ENCODE measurements at regions of chr6 and their contacts with region 1.

Region 1: DNA sequence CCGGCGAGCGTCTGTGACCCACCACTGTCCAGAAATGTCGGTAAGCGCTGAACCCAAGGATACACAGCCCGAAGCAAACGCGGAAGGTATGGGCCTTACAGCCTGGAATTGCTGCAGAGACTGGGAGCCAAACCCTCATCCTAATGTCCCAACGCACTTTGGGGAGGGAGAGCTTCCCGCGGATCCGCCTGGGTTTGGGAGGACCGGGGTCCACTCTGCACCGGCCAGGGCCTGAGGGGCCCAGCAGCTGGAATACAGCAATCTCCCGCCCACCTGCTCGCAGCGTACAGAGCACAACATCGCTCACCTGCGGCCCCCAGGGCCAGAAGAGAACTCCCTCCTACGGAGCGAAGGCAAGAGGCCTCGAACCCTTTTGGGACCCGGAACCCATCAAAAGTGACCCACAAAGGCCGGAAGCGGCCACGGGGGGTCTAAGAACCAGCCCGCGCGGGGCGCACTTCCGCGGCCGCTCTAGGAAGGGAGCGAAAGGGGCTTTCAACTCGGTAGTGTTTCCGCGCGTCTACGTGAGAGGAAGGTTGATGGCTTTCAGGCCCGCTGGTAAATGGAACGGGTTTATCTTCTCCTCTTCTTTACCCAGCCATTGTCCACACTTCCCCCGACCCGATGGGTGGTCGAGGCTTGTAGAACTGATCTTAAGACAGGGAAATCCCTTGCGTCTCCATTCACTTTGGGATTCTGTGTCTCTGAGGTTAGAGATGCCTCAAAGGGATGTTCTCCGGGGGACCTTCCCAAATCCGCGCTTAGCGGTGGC is at the start of gene ZSCAN12:
- DNase-seq: peak; percentile 81 to 90
- ATAC-seq: peak; percentile 95 to 96 (median 96)
- H3K4me3 ChIP-seq: peak within 1 kb of the TSS; percentile 92
- H3K4me3 Mint-ChIP-seq: peak within 1 kb of the TSS; percentile 93
- H3K27ac ChIP-seq: peak within 1 kb of the TSS; percentile 73
- H3K27ac Mint-ChIP-seq: peak within 1 kb of the TSS; percentile 80 to 89
- H3K4me1 ChIP-seq: peaks cover 16% of the 10 kb centered on the region
- H3K4me1 Mint-ChIP-seq: peaks cover 46 to 49% of the 10 kb centered on the region in 2 donors
- H3K27me3 ChIP-seq: peaks cover 3% of the 10 kb centered on the region
- H3K27me3 Mint-ChIP-seq: peaks cover 18 to 40% of the 10 kb centered on the region in 2 donors
- CTCF ChIP-seq: peak; percentile 54
- total RNA-seq, gene ZSCAN12: 3.5 to 4.9 (median 3.9) TPM

Region 2: DNA sequence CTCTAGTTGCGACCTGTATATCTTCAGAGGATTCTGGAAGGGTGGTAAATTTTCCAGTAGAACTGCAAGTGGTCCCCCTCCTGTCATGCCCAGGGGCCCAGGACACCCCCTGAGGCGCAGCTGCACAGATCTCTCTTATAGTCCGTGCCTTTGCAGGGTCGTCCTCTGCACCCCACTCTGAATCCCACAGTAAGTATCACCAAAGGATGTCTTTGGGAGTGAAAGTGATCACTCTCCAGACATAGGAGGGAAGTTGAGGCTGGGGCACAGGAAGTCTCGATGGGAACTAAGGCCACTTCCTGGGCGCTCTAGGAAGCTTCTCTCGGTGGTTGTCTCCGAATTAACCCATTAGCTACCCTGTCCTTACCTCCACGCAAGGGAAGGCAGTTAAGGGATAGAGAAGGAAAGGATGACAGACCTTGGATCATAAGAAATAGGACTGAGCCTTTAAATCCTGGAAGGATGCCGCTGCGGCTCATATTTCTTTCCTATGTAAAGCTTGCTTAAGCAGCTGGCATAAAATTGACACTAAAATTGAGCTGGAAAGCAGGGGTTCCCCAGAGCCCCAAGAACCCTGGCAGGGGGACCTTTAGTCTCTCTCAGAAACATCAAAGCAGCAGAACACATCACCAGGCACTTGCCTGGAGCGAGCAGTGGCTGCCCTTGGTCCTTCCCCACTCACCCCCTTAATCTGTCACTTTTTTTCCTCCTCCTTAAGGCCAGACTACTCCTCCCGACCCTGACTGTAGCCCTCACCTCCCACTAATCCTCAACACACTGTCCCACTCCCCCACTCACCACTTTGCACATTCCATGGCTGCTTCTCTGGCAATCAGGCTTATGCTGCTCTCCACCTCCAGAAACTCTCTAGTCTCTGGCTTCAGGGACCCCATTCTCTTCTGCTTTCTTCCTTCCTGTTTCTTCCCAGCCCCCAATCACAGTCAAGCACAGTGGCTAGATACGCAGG is 147.2 kb before region 1 on chr6 and contains the start of gene ZKSCAN4:
- intact Hi-C with region 1: loop called (anchors 1 kb)
- DNase-seq: peak; percentile 64 to 92
- ATAC-seq: peak; percentile 90 to 93 (median 91)
- H3K4me3 ChIP-seq: peak within 1 kb of the TSS; percentile 81
- H3K4me3 Mint-ChIP-seq: peak within 1 kb of the TSS; percentile 98
- H3K27ac ChIP-seq: peak within 1 kb of the TSS; percentile 59
- H3K27ac Mint-ChIP-seq: peak within 1 kb of the TSS; percentile 68 to 88
- H3K4me1 ChIP-seq: peaks cover 12% of the 10 kb centered on the region
- H3K4me1 Mint-ChIP-seq: peaks cover 31 to 38% of the 10 kb centered on the region in 2 donors
- H3K27me3 ChIP-seq: peaks cover 3% of the 10 kb centered on the region
- H3K27me3 Mint-ChIP-seq: peaks cover 3 to 8% of the 10 kb centered on the region in 2 donors
- CTCF ChIP-seq: no peak
- total RNA-seq, gene ZKSCAN4: 1.6 to 4.2 (median 2.9) TPM

Region 3: DNA sequence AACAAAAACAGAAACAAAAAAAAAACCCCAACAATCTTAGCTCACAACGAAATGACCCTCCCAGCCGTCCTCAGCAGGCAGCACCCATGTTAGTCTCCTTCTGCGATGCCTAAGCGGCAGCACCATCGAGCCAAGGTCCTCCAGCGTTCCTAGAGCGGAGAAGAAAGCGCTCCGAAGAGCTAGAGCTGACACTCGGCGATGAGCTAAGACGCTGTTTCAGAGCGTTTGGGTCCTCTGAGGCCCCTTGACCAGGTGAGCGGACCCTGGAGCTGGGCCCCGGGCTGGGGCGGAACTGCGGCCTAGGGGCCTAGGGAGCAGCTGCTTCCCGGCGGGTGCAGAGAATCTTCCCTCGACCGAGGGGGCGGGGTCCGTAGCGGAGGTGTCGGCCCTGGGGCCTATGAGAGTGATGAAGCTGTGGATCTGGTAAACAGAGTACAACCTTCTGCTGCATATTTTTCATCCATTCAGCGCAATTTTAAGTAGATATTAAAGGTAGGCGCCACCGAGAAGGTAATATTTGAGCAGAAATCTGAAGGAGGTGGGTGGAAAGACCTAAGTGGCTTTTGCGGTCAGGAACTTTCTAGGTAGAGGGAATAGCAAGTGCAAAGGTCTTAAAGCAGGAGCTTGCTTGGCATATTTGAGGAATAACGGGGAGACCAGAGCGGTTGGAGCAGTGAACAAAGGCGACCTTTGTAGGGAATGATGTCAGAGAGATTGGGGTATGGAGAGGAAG is 132.4 kb before region 1 on chr6 and contains the start of gene ZSCAN26:
- intact Hi-C with region 1: no loop called
- DNase-seq: peak; percentile 83 to 93
- ATAC-seq: peak; percentile 96 to 97 (median 96)
- H3K4me3 ChIP-seq: peak within 1 kb of the TSS; percentile 100
- H3K4me3 Mint-ChIP-seq: no peak within 1 kb of the TSS
- H3K27ac ChIP-seq: peak within 1 kb of the TSS; percentile 90
- H3K27ac Mint-ChIP-seq: no peak within 1 kb of the TSS
- H3K4me1 ChIP-seq: peaks cover 6% of the 10 kb centered on the region
- H3K4me1 Mint-ChIP-seq: no peaks in the 10 kb centered on the region
- H3K27me3 ChIP-seq: no peaks in the 10 kb centered on the region
- H3K27me3 Mint-ChIP-seq: peaks cover 5 to 28% of the 10 kb centered on the region in 2 donors
- CTCF ChIP-seq: no peak
- total RNA-seq, gene ZSCAN26: 13.7 to 24.4 (median 15.4) TPM

Region 4: DNA sequence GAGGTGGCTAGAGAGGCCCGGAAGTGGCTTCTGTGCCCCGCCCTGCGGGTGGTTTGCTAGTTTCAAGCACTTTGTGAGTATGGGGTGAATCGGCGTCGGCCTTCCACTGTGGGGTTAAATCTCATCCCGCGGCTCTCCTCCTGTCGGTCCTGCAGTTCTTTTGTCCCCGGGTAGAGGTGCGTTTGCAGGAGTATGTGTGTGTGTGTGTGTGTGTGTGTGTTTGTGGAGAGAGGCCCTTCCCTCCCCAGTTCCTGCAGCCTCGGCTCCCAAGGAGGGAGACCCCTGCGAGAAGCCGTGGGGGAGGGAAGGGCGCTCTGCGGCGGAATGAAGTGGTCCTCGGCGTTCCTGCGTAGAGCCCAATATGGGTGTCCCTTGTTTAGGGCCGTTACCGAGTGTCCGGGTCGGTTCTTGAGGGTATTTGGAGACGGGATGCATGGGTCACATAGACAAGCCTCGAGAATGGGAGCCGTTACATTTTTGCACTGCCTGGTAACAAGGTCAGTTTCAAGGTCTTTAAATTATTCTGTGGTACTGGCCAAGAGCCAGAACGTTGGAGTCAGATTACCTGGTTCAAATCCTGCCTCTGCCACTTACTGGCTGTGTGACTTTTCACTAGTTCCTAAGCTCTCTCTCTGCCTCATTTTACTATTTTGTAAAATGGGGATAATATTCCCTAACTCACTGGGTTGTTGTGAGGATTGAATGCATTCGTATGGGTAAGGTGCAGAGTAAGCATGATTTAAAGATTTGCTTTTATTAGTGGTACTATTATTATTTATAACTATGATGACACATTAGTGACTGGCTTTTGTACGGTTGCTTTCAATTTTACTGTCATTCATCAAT is 49.4 kb before region 1 on chr6 and contains the start of gene ZKSCAN3:
- intact Hi-C with region 1: loop called (anchors 5 kb)
- DNase-seq: peak; percentile 76 to 86
- ATAC-seq: peak; percentile 94 to 100 (median 99)
- H3K4me3 ChIP-seq: peak within 1 kb of the TSS; percentile 75
- H3K4me3 Mint-ChIP-seq: peak within 1 kb of the TSS; percentile 100
- H3K27ac ChIP-seq: peak within 1 kb of the TSS; percentile 44
- H3K27ac Mint-ChIP-seq: peak within 1 kb of the TSS; percentile 95 to 97
- H3K4me1 ChIP-seq: peaks cover 13% of the 10 kb centered on the region
- H3K4me1 Mint-ChIP-seq: peaks cover 24 to 27% of the 10 kb centered on the region in 2 donors
- H3K27me3 ChIP-seq: no peaks in the 10 kb centered on the region
- H3K27me3 Mint-ChIP-seq: peaks cover 9 to 18% of the 10 kb centered on the region in 2 donors
- CTCF ChIP-seq: no peak
- total RNA-seq, gene ZKSCAN3: 3.1 to 6.0 (median 4.7) TPM

Region 5: GRCh38 chr6:28360961-28361360 is 38.6 kb before region 1 on chr6:
- intact Hi-C with region 1: no loop called
- DNase-seq: no peak
- ATAC-seq: no peak
- H3K4me3 ChIP-seq: no peak overlapping the region
- H3K4me3 Mint-ChIP-seq: no peak overlapping the region
- H3K27ac ChIP-seq: no peak overlapping the region
- H3K27ac Mint-ChIP-seq: no peak overlapping the region
- H3K4me1 ChIP-seq: peaks cover 6% of the 10 kb centered on the region
- H3K4me1 Mint-ChIP-seq: peaks cover 13 to 19% of the 10 kb centered on the region in 2 donors
- H3K27me3 ChIP-seq: no peaks in the 10 kb centered on the region
- H3K27me3 Mint-ChIP-seq: no peaks in the 10 kb centered on the region
- CTCF ChIP-seq: no peak

Region 6: DNA sequence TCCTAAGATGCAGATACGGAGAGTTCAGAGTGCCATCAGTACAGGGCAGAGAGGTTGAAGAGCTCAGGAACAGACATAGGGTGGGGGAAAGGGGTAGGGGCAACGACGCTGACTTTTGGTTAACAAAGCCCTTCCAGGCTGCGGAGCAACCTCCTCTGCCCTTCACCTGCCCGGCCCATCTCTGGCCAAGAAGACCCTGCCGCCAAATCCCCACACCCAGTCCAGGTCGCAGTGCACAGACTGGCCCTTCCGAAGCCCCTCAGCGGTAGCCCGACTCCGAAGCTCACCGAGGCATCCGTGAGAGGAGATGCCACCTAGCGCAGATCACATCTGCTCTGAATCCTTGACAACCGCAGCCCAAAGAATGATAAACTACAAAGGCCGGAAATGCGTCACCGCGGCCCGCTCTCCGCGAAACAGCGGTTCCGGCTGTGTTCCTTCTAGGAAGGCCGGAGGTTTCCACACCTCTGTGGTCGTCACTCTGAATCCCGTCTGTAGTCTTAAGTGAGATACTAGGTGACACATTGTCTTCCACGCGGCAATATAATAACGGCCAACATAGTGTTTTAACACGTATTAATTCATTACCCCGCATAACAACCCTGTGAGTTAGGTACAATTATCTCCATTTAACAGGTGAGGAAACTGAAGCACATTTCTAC is 43.7 kb after region 1 on chr6 and contains the start of gene ZSCAN23:
- intact Hi-C with region 1: loop called (anchors 1 kb)
- DNase-seq: peak; percentile 70 to 94
- ATAC-seq: peak; percentile 86 to 92 (median 88)
- H3K4me3 ChIP-seq: peak within 1 kb of the TSS; percentile 38
- H3K4me3 Mint-ChIP-seq: peak within 1 kb of the TSS; percentile 87
- H3K27ac ChIP-seq: peak within 1 kb of the TSS; percentile 28
- H3K27ac Mint-ChIP-seq: peak within 1 kb of the TSS; percentile 71 to 87
- H3K4me1 ChIP-seq: peaks cover 16% of the 10 kb centered on the region
- H3K4me1 Mint-ChIP-seq: peaks cover 22 to 27% of the 10 kb centered on the region in 2 donors
- H3K27me3 ChIP-seq: peaks cover 16% of the 10 kb centered on the region
- H3K27me3 Mint-ChIP-seq: peaks cover 19 to 21% of the 10 kb centered on the region in 2 donors
- CTCF ChIP-seq: no peak
- total RNA-seq, gene ZSCAN23: 0.36 to 0.55 TPM in 2 of 3 donors, not detected in the other

Region 7: GRCh38 chr6:28462401-28462800 is 62.9 kb after region 1 on chr6:
- intact Hi-C with region 1: no loop called
- DNase-seq: peak in 1 of 2 donors; percentile 11
- ATAC-seq: no peak
- H3K4me3 ChIP-seq: no peak overlapping the region
- H3K4me3 Mint-ChIP-seq: no peak overlapping the region
- H3K27ac ChIP-seq: no peak overlapping the region
- H3K27ac Mint-ChIP-seq: no peak overlapping the region
- H3K4me1 ChIP-seq: no peaks in the 10 kb centered on the region
- H3K4me1 Mint-ChIP-seq: no peaks in the 10 kb centered on the region
- H3K27me3 ChIP-seq: peaks cover 11% of the 10 kb centered on the region
- H3K27me3 Mint-ChIP-seq: peaks cover 37 to 62% of the 10 kb centered on the region in 2 donors
- CTCF ChIP-seq: no peak

Region 8: DNA sequence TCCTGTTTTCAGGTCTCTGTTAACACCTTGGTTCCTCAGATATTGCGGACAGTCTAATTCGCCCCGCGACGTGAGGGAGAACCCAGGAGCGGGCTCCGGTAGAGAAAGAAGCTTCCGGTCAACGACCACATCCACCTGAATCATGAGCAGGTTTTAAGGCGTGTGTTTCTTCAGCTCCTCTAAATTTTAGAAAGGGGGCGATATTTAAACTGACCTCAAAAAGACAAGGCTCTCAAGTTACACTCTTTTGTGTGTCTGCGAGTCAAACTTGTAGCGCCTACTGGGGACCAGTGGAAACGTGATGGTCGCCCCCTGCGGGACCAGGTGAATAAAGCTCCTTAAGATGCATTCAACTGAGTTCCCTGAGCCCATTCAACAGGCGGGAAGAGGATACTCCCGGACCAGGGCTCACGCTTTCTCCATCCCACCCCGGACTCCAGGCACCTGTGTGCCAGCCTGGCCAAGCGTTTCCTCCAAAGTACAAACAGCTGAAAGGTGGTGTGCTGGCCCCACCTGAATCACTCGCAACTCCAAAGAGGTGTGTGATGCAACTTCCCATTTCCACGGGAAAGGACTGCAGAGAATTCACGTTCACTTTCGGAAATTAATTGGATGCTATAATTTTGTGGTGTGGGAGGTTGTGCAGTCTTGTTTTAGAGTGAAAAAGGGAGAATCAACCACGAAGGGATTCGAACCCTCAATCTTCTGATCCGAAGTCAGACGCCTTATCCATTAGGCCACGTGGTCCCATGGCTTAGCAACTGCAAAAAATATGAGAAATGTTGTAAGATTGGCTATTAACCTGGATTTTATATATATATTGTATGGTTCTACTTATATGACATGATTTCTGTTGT is 143.1 kb after region 1 on chr6:
- intact Hi-C with region 1: no loop called
- DNase-seq: peak in 1 of 2 donors; percentile 75
- ATAC-seq: peak in 1 of 3 donors; percentile 36
- H3K4me3 ChIP-seq: no peak overlapping the region
- H3K4me3 Mint-ChIP-seq: peak overlapping the region; percentile 35
- H3K27ac ChIP-seq: no peak overlapping the region
- H3K27ac Mint-ChIP-seq: no peak overlapping the region
- H3K4me1 ChIP-seq: peaks cover 14% of the 10 kb centered on the region
- H3K4me1 Mint-ChIP-seq: peaks cover 7 to 10% of the 10 kb centered on the region in 2 donors
- H3K27me3 ChIP-seq: peaks cover 28% of the 10 kb centered on the region
- H3K27me3 Mint-ChIP-seq: peaks cover 38 to 92% of the 10 kb centered on the region in 2 donors
- CTCF ChIP-seq: no peak

Measured in natural killer cell (primary cell).